ENCODE measurements at regions of chr2 and their contacts with region 1.

Region 1: DNA sequence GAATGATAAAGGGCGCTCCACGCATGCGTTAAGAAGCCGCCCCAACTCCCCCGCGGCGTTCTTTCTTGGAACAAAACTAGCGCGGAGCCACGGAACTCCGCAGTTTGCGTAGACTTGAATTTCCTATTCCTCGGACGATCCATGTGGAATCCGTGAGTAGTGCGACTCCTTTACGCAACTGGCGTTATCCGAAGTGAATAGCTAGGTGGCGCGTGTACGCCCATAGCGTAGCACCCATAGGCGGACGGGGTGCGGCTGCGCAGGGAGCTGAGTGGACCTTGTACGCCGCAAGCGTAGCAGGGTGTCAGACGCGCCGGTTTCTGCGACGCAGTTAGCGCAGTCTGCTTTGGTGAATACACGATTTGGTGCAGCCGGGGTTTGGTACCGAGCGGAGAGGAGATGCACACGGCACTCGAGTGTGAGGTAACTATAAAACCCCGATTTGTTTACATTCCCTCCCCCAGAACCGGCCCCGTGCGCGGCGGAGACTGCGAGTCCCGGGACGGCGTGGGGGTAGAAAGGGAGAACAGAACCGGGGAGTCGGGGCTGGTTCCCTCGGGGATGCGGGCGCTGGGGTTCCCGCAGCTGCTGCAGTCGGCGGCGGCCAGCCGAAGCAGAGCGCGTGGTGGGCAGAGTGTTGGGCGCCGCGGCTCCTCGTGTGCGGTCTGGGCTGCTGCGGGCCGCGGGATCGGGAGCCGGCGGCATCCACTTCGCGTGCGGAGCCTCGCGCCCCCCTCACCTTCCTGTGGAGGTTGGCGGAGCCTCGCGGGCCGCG is at the start of gene SLC39A10:
- DNase-seq: peak; percentile 100
- H3K4me3 ChIP-seq: peak within 1 kb of the TSS; percentile 50 to 74 (median 71)
- H3K27ac ChIP-seq: peak within 1 kb of the TSS; percentile 84
- H3K4me1 ChIP-seq: peaks cover 26% of the 10 kb centered on the region
- H3K27me3 ChIP-seq: no peaks in the 10 kb centered on the region
- CTCF ChIP-seq: no peak
- POLR2A ChIP-seq: peak; percentile 96
- total RNA-seq, gene SLC39A10: 39.9 and 47.4 TPM in 2 replicates

Region 2: GRCh38 chr2:195364015-195364965 is 292.8 kb before region 1 on chr2:
- CTCF ChIA-PET with region 1: no interaction called
- POLR2A ChIA-PET with region 1: no interaction called
- dilution Hi-C with region 1: no loop called
- intact Hi-C with region 1: loop called (anchors 5 kb)
- DNase-seq: peak; percentile 61
- H3K4me3 ChIP-seq: peak overlapping the region in 1 of 3 experiments; percentile 24
- H3K27ac ChIP-seq: peak overlapping the region; percentile 35
- H3K4me1 ChIP-seq: peaks cover 10% of the 10 kb centered on the region
- H3K27me3 ChIP-seq: no peaks in the 10 kb centered on the region
- CTCF ChIP-seq: no peak
- POLR2A ChIP-seq: no peak

Region 3: GRCh38 chr2:195498176-195498575 is 158.9 kb before region 1 on chr2:
- CTCF ChIA-PET with region 1: interaction called, 67 read pairs
- POLR2A ChIA-PET with region 1: no interaction called
- dilution Hi-C with region 1: no loop called
- intact Hi-C with region 1: loop called (anchors 1 kb)
- DNase-seq: peak; percentile 38
- H3K4me3 ChIP-seq: no peak overlapping the region
- H3K27ac ChIP-seq: no peak overlapping the region
- H3K4me1 ChIP-seq: no peaks in the 10 kb centered on the region
- H3K27me3 ChIP-seq: no peaks in the 10 kb centered on the region
- CTCF ChIP-seq: peak in 1 of 2 donors; percentile 23
- POLR2A ChIP-seq: no peak

Region 4: DNA sequence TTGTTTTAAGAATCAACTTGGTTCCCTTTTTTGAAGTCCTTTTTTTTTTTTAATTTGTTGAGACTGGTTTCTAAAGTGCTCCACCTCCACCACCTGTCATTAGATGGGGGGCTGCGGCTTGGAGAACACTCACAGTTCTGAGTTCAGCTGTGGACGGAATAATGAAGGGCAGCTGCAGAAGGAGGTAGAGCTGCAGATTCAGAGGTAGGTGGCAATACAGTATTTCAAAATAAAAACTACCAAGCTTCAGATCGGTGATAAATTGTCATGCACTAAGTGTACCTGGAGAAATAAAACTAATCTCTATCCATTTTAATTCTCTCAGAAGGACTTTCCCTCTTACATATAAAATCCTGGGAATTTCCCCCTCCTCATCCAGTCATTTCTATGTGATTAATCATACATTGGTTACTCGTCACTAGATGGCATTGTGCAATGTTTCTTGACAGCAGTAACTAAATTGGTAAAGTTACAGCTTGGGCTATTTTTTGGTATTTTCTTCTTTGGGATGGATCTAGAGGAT is 81.1 kb before region 1 on chr2:
- CTCF ChIA-PET with region 1: interaction called, 59 read pairs
- POLR2A ChIA-PET with region 1: interaction called, 5 read pairs
- dilution Hi-C with region 1: no loop called
- intact Hi-C with region 1: loop called (anchors 1 kb)
- DNase-seq: peak; percentile 59
- H3K4me3 ChIP-seq: no peak overlapping the region
- H3K27ac ChIP-seq: no peak overlapping the region
- H3K4me1 ChIP-seq: no peaks in the 10 kb centered on the region
- H3K27me3 ChIP-seq: no peaks in the 10 kb centered on the region
- CTCF ChIP-seq: peak in 1 of 2 donors; percentile 1
- POLR2A ChIP-seq: no peak

Region 5: GRCh38 chr2:195672668-195673067 is 15.6 kb after region 1 on chr2:
- CTCF ChIA-PET with region 1: interaction called, 19 read pairs
- POLR2A ChIA-PET with region 1: interaction called, 3 read pairs
- dilution Hi-C with region 1: no loop called
- intact Hi-C with region 1: no loop called
- DNase-seq: no peak
- H3K4me3 ChIP-seq: no peak overlapping the region
- H3K27ac ChIP-seq: no peak overlapping the region
- H3K4me1 ChIP-seq: no peaks in the 10 kb centered on the region
- H3K27me3 ChIP-seq: no peaks in the 10 kb centered on the region
- CTCF ChIP-seq: no peak
- POLR2A ChIP-seq: no peak

Region 6: GRCh38 chr2:195967336-195967735 is 310.3 kb after region 1 on chr2:
- CTCF ChIA-PET with region 1: no interaction called
- POLR2A ChIA-PET with region 1: no interaction called
- dilution Hi-C with region 1: no loop called
- intact Hi-C with region 1: no loop called
- DNase-seq: peak; percentile 72
- H3K4me3 ChIP-seq: no peak overlapping the region
- H3K27ac ChIP-seq: no peak overlapping the region
- H3K4me1 ChIP-seq: no peaks in the 10 kb centered on the region
- H3K27me3 ChIP-seq: no peaks in the 10 kb centered on the region
- CTCF ChIP-seq: no peak
- POLR2A ChIP-seq: no peak

Region 7: DNA sequence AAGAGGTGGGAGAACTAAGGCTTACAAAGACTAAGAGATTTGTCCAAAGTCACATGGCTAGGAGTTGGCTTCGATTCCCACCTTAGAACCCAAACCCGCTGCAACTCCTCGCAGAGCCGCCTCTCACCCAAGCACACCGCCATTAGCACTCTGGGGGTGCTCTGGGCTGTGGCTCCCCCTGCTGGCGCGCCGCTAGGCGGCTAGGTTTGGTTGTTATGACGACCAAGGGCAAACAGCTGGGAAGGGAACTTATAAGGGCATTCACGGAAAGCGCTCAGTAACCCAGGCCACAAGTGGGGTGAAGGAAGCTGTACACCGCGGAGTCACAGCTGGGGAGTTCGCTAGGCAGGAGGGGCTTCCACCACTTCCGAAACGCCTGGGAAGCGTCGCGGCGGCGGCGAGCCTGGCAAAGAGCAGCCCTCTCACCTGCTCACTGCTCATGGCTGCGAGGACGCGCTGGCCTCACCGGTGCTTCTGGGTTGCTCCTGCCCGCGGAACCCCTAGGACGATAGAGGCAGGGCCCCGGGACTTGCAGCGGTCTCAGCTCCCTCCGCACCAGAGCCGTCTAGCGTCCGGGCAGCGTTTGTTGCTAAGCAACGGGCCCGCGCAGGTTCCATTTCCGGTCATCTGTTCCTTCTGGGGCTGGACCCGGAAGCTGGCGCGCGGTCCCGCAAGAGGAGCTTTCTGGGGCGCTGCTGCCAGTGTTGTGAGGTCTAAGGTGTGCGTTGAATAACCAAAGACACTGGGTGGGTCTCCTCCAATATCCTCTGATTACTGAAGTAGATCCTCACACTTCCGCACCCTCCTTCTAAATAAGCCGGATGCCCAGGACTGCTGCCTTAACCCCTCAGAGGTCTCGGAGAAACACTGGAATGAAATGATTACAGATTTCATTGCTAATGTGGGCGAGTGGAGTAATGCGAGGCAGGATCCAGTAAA is 411.5 kb after region 1 on chr2 and contains the start of gene DNAH7:
- CTCF ChIA-PET with region 1: interaction called, 23 read pairs
- POLR2A ChIA-PET with region 1: no interaction called
- dilution Hi-C with region 1: no loop called
- intact Hi-C with region 1: loop called (anchors 1 kb)
- DNase-seq: peak; percentile 86
- H3K4me3 ChIP-seq: peak within 1 kb of the TSS; percentile 7 to 98 (median 52)
- H3K27ac ChIP-seq: peak within 1 kb of the TSS; percentile 27
- H3K4me1 ChIP-seq: peaks cover 5% of the 10 kb centered on the region
- H3K27me3 ChIP-seq: peaks cover 17 to 41% of the 10 kb centered on the region in 2 experiments
- CTCF ChIP-seq: peak; percentile 90 to 99
- POLR2A ChIP-seq: peak; percentile 45
- total RNA-seq, gene DNAH7: 0.05 and 0.24 TPM in 2 replicates

Region 8: DNA sequence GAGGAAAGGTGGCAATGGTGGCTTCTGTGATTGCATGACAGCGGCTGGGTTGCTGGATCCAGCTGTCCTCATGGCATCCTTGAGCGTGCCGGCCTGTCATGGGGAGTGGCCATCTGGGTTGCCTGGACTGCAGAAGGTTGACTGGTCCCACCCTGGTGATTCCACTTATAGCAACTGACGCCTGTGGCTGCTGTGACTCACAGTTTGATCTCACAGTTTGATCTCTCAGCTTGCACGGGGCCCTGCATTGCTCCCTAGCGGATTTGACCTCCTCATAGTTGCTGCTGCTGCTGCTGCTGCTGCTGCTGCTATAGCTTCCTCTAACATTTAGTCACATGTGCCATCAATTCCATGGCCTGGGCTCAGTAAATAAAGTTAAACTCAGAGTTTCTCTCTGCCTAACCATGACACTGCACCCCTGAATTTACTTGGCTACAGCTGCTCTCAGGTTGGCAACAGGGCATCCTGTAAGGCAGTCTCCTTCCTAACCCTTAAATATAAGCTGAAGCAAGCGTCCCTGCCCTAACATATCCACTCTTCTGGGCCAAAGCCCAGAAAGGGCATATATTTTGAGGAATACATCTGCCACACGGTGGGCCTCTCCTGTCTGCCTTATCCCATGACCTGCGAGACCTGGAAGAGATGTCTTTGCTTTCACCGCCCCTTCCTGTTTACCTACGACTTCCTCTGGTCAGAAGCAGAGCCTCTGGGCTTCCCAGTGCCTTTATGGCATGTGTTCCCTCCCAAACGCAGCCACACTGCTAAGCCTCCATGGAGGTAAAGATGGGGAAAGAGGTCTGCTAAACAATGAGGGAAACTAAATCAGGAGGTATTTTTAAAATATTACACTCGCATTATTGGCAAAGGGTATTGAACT is 944.6 kb after region 1 on chr2:
- CTCF ChIA-PET with region 1: no interaction called
- POLR2A ChIA-PET with region 1: no interaction called
- dilution Hi-C with region 1: no loop called
- intact Hi-C with region 1: loop called (anchors 10 kb)
- DNase-seq: peak; percentile 88
- H3K4me3 ChIP-seq: no peak overlapping the region
- H3K27ac ChIP-seq: peak overlapping the region; percentile 82
- H3K4me1 ChIP-seq: peaks cover 25% of the 10 kb centered on the region
- H3K27me3 ChIP-seq: no peaks in the 10 kb centered on the region
- CTCF ChIP-seq: no peak
- POLR2A ChIP-seq: no peak

Measured in endothelial cell of umbilical vein (primary cell).